Activated T-helper 1 cell treated with anti-CD3 and anti-CD28 coated beads, Interleukin-12 subunit alpha, Interleukin-12 subunit beta, Interleukin-2, Interleukin-4 antibody, amounts not matched to agents 30 ng/mL and 10 ng/mL and 1 ng/mL, durations not matched to agents 14 hours and 24 hours and 36 hours (primary cell): ENCODE measurements at regions of chr2 and their contacts with region 1.

Region 1: GRCh38 chr2:39513641-39514094 is 76.6 kb upstream of the MAP4K3 start:
- DNase-seq: peak; percentile 37
- H3K4me3 Mint-ChIP-seq: peak overlapping the region; percentile 3
- H3K27ac Mint-ChIP-seq: peak overlapping the region; percentile 66
- H3K4me1 Mint-ChIP-seq: peaks cover 50% of the 10 kb centered on the region
- H3K27me3 Mint-ChIP-seq: peaks cover 2% of the 10 kb centered on the region

Region 2: GRCh38 chr2:39436592-39437510 is 76.8 kb before region 1 on chr2 and contains the start of gene MAP4K3:
- intact Hi-C with region 1: loop called (anchors 1 kb)
- DNase-seq: peak; percentile 65
- H3K4me3 Mint-ChIP-seq: peak within 1 kb of the TSS; percentile 96
- H3K27ac Mint-ChIP-seq: peak within 1 kb of the TSS; percentile 86
- H3K4me1 Mint-ChIP-seq: peaks cover 51% of the 10 kb centered on the region
- H3K27me3 Mint-ChIP-seq: no peaks in the 10 kb centered on the region
- total RNA-seq, gene MAP4K3: 15.7 and 24.1 TPM in 2 replicates

Region 3: GRCh38 chr2:39492095-39492590 is 21.5 kb before region 1 on chr2:
- intact Hi-C with region 1: loop called (anchors 1 kb)
- DNase-seq: peak; percentile 23
- H3K4me3 Mint-ChIP-seq: peak overlapping the region; percentile 55
- H3K27ac Mint-ChIP-seq: peak overlapping the region; percentile 76
- H3K4me1 Mint-ChIP-seq: peaks cover 52% of the 10 kb centered on the region
- H3K27me3 Mint-ChIP-seq: peaks cover 13% of the 10 kb centered on the region

Region 4: DNA sequence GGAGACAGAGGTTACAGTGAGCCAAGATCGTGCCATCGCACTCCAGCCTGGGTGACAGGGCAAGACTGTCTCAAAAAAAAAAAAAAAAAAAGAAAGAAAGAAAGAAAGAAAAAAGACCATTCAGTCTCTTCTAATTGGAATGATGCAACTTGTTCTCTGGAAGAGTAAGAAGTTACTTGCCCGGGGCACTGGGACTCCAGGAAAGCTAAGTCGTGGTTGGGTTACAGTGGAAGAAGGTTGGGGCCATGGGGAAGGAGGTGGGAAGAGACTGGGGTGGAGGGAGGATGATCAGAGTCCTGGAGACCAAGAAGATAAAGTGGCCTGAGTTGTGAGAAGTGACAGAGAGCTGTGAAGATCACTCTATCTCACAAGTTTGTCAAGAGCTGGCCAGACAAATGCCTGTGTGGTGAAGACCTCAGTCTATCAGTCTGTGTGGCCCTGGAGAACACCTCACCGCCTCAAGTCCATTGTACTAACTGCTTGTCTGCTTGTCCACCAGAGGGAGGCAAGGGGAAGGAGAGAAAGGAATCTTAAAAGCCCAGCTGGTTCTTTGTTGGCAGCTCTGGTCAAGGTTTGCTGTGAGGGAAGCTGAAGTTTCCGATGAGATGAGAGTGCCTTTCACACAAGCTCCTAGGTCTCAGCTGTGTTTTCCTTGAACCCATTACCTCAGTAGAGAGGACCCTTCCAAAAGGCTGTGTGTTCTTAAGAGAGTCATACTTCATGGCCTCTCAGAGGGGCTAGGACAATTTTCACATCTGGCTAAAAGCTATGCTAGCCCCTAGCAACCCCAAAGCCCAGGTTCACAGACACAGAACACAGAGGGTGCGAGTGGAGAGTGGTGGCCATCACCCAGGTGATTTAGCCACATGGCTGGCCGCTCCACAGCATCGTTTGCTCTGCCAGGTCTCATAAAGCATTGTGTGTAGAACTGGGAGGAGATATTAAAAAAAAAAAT is 80.0 kb after region 1 on chr2:
- intact Hi-C with region 1: no loop called
- DNase-seq: no peak
- H3K4me3 Mint-ChIP-seq: no peak overlapping the region
- H3K27ac Mint-ChIP-seq: no peak overlapping the region
- H3K4me1 Mint-ChIP-seq: no peaks in the 10 kb centered on the region
- H3K27me3 Mint-ChIP-seq: no peaks in the 10 kb centered on the region

Region 5: GRCh38 chr2:39657287-39657937 is 143.7 kb after region 1 on chr2:
- intact Hi-C with region 1: loop called (anchors 5 kb)
- DNase-seq: no peak
- H3K4me3 Mint-ChIP-seq: no peak overlapping the region
- H3K27ac Mint-ChIP-seq: no peak overlapping the region
- H3K4me1 Mint-ChIP-seq: no peaks in the 10 kb centered on the region
- H3K27me3 Mint-ChIP-seq: peaks cover 10% of the 10 kb centered on the region

Region 6: GRCh38 chr2:39778962-39779851 is 265.5 kb after region 1 on chr2 and contains the start of gene THUMPD2:
- intact Hi-C with region 1: no loop called
- DNase-seq: peak; percentile 67
- H3K4me3 Mint-ChIP-seq: peak within 1 kb of the TSS; percentile 94
- H3K27ac Mint-ChIP-seq: peak within 1 kb of the TSS; percentile 95
- H3K4me1 Mint-ChIP-seq: peaks cover 49% of the 10 kb centered on the region
- H3K27me3 Mint-ChIP-seq: peaks cover 5% of the 10 kb centered on the region
- total RNA-seq, gene THUMPD2: 21.2 and 21.6 TPM in 2 replicates

Region 7: GRCh38 chr2:39913648-39914461 is 400.2 kb after region 1 on chr2:
- intact Hi-C with region 1: loop called (anchors 10 kb)
- DNase-seq: no peak
- H3K4me3 Mint-ChIP-seq: no peak overlapping the region
- H3K27ac Mint-ChIP-seq: peak overlapping the region; percentile 53
- H3K4me1 Mint-ChIP-seq: peaks cover 17% of the 10 kb centered on the region
- H3K27me3 Mint-ChIP-seq: peaks cover 17% of the 10 kb centered on the region